Right cardiac atrium (tissue), 5 donors: ENCODE measurements at regions of chr7 and their contacts with region 1.

Region 1: DNA sequence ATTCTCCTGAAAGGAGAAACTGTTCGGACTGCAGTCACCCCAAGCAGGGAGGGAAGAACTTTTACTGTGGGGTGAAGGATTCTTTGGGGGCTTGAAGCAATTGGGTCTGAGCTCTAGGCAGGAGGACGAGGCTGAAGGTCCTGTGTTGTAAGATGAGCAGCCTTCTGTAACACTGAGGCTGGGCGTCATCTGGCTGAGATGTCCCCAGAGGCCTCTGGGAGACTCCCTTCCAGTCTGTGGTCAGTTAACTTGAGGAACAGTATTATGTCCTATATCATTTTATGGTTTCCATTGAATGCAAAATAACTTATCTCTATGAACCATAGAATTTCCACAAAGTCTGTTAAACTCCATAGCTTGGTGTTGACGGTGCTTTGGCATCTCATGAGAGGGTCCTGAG is 26.3 kb downstream of the FIGNL1 start:
- DNase-seq: no peak
- ATAC-seq: no peak
- H3K4me3 ChIP-seq: no peak overlapping the region
- H3K27ac ChIP-seq: no peak overlapping the region
- H3K4me1 ChIP-seq: no peaks in the 10 kb centered on the region
- H3K27me3 ChIP-seq: no peaks in the 10 kb centered on the region

Region 2: DNA sequence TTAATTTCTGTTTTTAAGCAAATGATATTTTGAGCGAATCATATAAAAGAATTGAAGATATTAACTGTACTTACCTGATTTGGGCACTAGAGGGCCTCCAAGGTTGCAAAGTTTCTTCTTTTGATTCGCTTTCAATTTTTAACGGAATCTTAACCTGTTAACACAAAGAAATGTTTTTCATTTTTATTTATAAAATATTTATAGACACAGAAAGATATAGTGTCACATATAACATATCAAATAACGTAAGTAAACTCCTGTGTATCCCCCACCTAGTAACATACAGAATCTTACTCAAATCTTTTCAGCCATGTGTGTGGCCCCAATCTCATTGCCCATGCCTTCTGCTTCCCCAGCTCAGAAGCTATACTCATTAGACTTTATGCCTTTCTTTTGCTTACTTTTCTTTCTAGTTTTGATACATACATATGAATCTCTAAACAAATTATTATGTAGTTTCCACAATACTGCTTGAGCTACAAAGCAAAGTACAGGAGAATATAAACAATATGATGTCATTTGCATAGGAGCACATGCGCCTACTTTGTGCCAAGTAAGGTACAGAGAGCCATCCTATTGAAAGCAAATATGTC is 281.3 kb before region 1 on chr7:
- intact Hi-C with region 1: loop called in 3 of 4 experiments (anchors 5 kb)
- DNase-seq: no peak
- ATAC-seq: no peak
- H3K4me3 ChIP-seq: no peak overlapping the region
- H3K27ac ChIP-seq: no peak overlapping the region
- H3K4me1 ChIP-seq: no peaks in the 10 kb centered on the region
- H3K27me3 ChIP-seq: no peaks in the 10 kb centered on the region